OCI-LY7 (cell line): ENCODE measurements at regions of chr5 and their contacts with region 1.

Region 1: GRCh38 chr5:164600274-164600673 is 1094.9 kb downstream of the MAT2B start:
- DNase-seq: no peak
- H3K4me3 ChIP-seq: no peak overlapping the region
- H3K27ac ChIP-seq: no peak overlapping the region
- H3K4me1 ChIP-seq: no peaks in the 10 kb centered on the region
- CTCF ChIP-seq: no peak

Region 2: DNA sequence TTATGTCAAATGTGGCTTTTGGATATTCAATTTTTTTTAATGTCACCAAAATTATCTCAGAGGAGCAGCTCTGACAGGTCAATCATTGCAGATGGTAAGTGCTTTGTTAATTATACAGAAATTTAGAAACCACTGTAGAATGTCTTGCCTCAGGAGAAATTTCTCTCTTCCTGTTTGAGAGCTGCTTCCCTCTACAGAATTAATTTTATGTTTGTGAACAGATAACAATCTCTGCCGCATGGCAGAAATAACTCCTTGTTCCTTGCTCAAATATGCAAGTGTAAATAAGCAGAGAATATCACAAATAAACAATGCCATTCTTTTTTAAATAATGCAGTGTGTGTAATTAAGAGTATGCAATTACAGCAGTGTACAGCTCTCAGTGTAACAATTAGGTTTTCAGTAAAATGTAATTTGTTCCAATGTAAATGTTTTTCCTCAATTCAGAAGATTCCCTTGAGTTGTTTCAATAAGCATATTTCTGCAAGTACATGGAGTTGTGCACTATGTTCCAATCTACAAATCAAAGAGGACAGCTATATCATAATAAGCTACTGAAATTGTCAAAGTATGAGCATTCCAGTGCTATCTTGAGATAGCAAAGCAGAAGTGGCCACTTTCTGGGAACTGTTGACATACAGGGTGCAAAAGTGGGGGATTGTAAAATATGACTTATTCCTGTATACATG is 82.1 kb before region 1 on chr5:
- CTCF ChIA-PET with region 1: no interaction called
- POLR2A ChIA-PET with region 1: no interaction called
- intact Hi-C with region 1: no loop called
- DNase-seq: no peak
- H3K4me3 ChIP-seq: no peak overlapping the region
- H3K27ac ChIP-seq: no peak overlapping the region
- H3K4me1 ChIP-seq: no peaks in the 10 kb centered on the region
- CTCF ChIP-seq: no peak

Region 3: GRCh38 chr5:166022065-166022464 is 1421.8 kb after region 1 on chr5:
- CTCF ChIA-PET with region 1: no interaction called
- POLR2A ChIA-PET with region 1: no interaction called
- intact Hi-C with region 1: loop called (anchors 10 kb)
- DNase-seq: no peak
- H3K4me3 ChIP-seq: no peak overlapping the region
- H3K27ac ChIP-seq: no peak overlapping the region
- H3K4me1 ChIP-seq: no peaks in the 10 kb centered on the region
- CTCF ChIP-seq: no peak